CD4-positive, alpha-beta memory T cell (primary cell): ENCODE measurements at regions of chr15 and their contacts with region 1.

Region 1: DNA sequence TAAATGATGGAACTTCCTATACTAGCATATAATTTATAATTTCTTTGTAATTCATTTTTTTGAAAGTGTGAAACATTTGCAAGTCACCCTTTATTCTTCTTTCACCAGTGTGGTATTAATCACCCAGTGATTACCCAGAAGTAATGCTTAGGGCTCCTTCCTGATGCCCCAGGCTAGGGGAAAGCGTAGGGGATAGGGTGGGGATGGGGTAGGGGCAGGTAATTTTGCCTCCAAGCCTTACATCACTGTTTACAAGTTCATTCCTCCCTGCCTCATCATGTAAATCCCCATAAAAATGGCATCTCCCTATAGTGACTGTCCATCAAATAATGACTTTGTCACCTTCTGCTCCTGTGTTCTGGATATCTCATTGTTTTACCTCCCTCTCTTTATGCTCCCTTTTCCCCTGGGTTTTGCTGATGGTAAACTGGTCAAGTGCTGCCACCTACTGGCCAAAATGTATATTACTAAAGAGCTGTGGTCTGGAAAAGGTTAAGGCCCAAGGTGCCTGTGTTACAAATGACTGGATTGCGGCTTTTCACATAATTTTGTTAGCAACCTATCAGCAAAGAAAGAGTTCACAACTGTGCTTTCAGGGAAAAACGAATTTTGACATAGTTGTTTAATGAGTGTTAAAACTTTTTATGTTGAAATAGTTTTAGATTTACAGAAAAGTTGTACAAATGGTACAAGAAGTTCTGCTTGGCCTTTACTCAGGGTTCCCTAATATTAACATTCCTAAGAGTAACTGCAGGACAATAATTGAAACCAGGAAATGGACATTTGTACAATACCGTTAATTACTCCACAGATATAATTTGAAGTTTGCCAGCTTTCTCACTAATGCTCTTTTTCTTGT is 54.7 kb downstream of the ONECUT1 start:
- DNase-seq: peak; percentile 76 to 83 (median 77)
- H3K4me3 ChIP-seq: no peak overlapping the region
- H3K4me3 Mint-ChIP-seq: no peak overlapping the region
- H3K27ac ChIP-seq: no peak overlapping the region
- H3K27ac Mint-ChIP-seq: peak overlapping the region in 2 of 7 donors; percentile 7 to 47
- H3K4me1 ChIP-seq: peaks cover 3% of the 10 kb centered on the region
- H3K4me1 Mint-ChIP-seq: peaks cover 1 to 5% (median 3%) of the 10 kb centered on the region in 4 donors
- H3K27me3 ChIP-seq: no peaks in the 10 kb centered on the region
- H3K27me3 Mint-ChIP-seq: peaks cover 6 to 7% of the 10 kb centered on the region in 2 donors

Region 2: GRCh38 chr15:52256366-52256765 is 479.1 kb before region 1 on chr15:
- CTCF ChIA-PET with region 1: interaction called, 190 read pairs
- POLR2A ChIA-PET with region 1: interaction called, 12 read pairs
- intact Hi-C with region 1: loop called (anchors 1 kb)
- DNase-seq: peak; percentile 75 to 77 (median 76)
- H3K4me3 ChIP-seq: no peak overlapping the region
- H3K4me3 Mint-ChIP-seq: peak overlapping the region; percentile 63 to 90 (median 82)
- H3K27ac ChIP-seq: no peak overlapping the region
- H3K27ac Mint-ChIP-seq: peak overlapping the region; percentile 20 to 86 (median 72)
- H3K4me1 ChIP-seq: peaks cover 15% of the 10 kb centered on the region
- H3K4me1 Mint-ChIP-seq: peaks cover 10 to 26% (median 19%) of the 10 kb centered on the region in 4 donors
- H3K27me3 ChIP-seq: no peaks in the 10 kb centered on the region
- H3K27me3 Mint-ChIP-seq: no peaks in the 10 kb centered on the region

Region 3: DNA sequence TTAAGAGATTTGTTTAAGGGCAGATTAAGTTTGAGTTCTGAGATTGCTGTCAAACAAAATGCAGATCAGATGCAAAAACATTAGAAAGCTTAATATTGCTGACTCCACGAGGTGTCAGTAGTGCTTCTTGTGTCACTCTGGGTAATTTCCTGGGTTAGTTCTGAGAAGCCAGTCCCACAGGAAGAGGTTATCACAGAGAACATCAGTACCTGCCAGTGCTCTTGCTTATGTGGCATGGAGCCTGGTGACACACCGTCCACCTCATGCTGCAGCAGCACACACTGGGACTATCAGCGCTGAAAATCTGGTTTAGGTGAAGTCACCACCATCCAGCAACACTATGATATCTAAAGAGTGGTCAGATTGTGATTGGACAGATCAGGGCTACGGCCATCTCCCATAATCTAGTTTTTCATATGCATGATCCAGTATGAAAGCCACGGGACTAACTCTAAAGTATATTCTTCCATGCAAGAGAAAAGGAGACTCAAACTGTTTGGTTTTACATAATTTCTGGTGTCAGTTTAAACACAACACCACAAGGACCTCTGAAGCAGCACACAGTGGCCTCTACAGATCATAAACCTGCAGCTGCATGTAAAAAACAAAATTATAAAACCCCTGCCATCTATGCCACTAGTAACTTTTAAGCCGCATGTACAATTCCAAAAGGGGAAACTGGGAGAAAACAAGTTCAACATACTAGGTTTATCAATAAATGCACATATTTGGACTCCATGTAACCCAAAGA is 403.8 kb before region 1 on chr15:
- CTCF ChIA-PET with region 1: interaction called, 57 read pairs
- POLR2A ChIA-PET with region 1: interaction called, 5 read pairs
- intact Hi-C with region 1: loop called (anchors 1 kb)
- DNase-seq: peak; percentile 64 to 74 (median 66)
- H3K4me3 ChIP-seq: no peak overlapping the region
- H3K4me3 Mint-ChIP-seq: peak overlapping the region in 7 of 8 donors; percentile 46 to 79 (median 72)
- H3K27ac ChIP-seq: no peak overlapping the region
- H3K27ac Mint-ChIP-seq: peak overlapping the region; percentile 70 to 93 (median 80)
- H3K4me1 ChIP-seq: peaks cover 13% of the 10 kb centered on the region
- H3K4me1 Mint-ChIP-seq: peaks cover 13 to 21% (median 15%) of the 10 kb centered on the region in 4 donors
- H3K27me3 ChIP-seq: no peaks in the 10 kb centered on the region
- H3K27me3 Mint-ChIP-seq: no peaks in the 10 kb centered on the region

Region 4: DNA sequence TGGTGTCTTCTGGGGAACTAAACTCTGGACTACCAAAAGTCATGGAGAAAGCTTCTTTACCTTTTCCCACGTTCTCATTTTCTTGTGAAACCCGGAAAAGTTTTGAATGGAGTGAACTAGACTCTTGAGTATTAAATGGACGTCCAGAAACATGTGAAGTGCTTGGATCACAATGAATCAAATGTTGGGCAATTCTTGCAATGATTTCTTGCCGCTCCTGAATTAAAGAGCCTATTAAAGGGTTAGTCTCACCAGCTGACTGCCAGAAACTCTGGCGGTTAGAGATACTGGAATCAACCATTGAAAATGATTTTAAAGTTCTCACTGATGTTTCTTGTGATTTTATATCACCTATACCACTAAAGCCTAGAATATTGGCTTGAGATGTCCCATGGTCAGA is 125.9 kb before region 1 on chr15:
- CTCF ChIA-PET with region 1: interaction called, 3 read pairs
- POLR2A ChIA-PET with region 1: no interaction called
- intact Hi-C with region 1: loop called (anchors 10 kb)
- DNase-seq: no peak
- H3K4me3 ChIP-seq: no peak overlapping the region
- H3K4me3 Mint-ChIP-seq: no peak overlapping the region
- H3K27ac ChIP-seq: no peak overlapping the region
- H3K27ac Mint-ChIP-seq: no peak overlapping the region
- H3K4me1 ChIP-seq: no peaks in the 10 kb centered on the region
- H3K4me1 Mint-ChIP-seq: peaks cover 0 to 1% (median 0%) of the 10 kb centered on the region in 4 donors
- H3K27me3 ChIP-seq: no peaks in the 10 kb centered on the region
- H3K27me3 Mint-ChIP-seq: no peaks in the 10 kb centered on the region

Region 5: GRCh38 chr15:52651868-52652267 is 83.6 kb before region 1 on chr15:
- CTCF ChIA-PET with region 1: interaction called, 10 read pairs
- POLR2A ChIA-PET with region 1: no interaction called
- intact Hi-C with region 1: no loop called
- DNase-seq: peak; percentile 31 to 59 (median 45)
- H3K4me3 ChIP-seq: no peak overlapping the region
- H3K4me3 Mint-ChIP-seq: peak overlapping the region; percentile 32 to 65 (median 42)
- H3K27ac ChIP-seq: no peak overlapping the region
- H3K27ac Mint-ChIP-seq: peak overlapping the region in 6 of 7 donors; percentile 42 to 82 (median 56)
- H3K4me1 ChIP-seq: peaks cover 16% of the 10 kb centered on the region
- H3K4me1 Mint-ChIP-seq: peaks cover 10 to 31% (median 20%) of the 10 kb centered on the region in 4 donors
- H3K27me3 ChIP-seq: no peaks in the 10 kb centered on the region
- H3K27me3 Mint-ChIP-seq: no peaks in the 10 kb centered on the region

Region 6: DNA sequence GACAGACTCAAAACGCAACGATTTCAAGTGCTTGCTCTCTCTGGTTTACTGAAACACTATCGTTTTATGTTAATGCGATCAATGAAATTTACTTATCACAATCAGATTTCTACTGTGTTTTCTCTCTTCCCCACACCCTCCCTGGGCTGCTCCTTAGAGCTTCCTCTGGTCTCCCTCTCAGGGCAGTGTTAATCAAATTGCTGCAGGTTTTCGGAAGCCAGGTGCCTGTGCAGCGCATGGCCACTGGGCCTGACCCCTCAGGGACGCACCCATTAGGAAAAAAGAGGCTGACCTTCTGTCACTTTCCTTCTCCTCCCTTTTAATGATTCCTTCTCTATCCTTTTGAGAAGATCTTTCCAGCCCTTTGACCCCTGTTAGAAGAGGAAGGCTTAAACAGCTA is 189.2 kb after region 1 on chr15:
- CTCF ChIA-PET with region 1: no interaction called
- POLR2A ChIA-PET with region 1: no interaction called
- intact Hi-C with region 1: no loop called
- DNase-seq: no peak
- H3K4me3 ChIP-seq: no peak overlapping the region
- H3K4me3 Mint-ChIP-seq: no peak overlapping the region
- H3K27ac ChIP-seq: no peak overlapping the region
- H3K27ac Mint-ChIP-seq: no peak overlapping the region
- H3K4me1 ChIP-seq: no peaks in the 10 kb centered on the region
- H3K4me1 Mint-ChIP-seq: no peaks in the 10 kb centered on the region
- H3K27me3 ChIP-seq: no peaks in the 10 kb centered on the region
- H3K27me3 Mint-ChIP-seq: peaks cover 5 to 15% of the 10 kb centered on the region in 2 donors

Region 7: DNA sequence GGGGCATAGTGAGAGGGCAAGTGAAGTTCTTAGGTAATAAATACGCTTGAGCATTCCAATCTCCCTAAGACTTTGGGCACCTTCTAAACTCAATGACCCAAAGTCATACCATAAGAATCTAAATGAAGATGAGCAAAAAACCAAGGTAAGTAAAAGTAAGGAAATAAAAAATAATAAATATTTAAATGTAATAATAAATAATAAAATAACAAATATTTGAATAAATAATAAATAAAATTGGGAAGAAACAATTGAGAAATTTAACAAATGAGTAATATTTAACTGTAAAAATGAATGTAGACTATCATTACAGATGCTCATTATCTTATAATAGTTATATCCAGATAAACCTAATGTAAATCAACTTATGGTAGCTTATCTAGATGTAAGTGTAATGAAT is 632.3 kb after region 1 on chr15:
- CTCF ChIA-PET with region 1: no interaction called
- POLR2A ChIA-PET with region 1: no interaction called
- intact Hi-C with region 1: no loop called
- DNase-seq: no peak
- H3K4me3 ChIP-seq: no peak overlapping the region
- H3K4me3 Mint-ChIP-seq: no peak overlapping the region
- H3K27ac ChIP-seq: no peak overlapping the region
- H3K27ac Mint-ChIP-seq: no peak overlapping the region
- H3K4me1 ChIP-seq: no peaks in the 10 kb centered on the region
- H3K4me1 Mint-ChIP-seq: no peaks in the 10 kb centered on the region
- H3K27me3 ChIP-seq: no peaks in the 10 kb centered on the region
- H3K27me3 Mint-ChIP-seq: no peaks in the 10 kb centered on the region